GM12878 (cell line): ENCODE measurements at regions of chr3 and their contacts with region 1.

Region 1: GRCh38 chr3:192467230-192468140 is 259.9 kb downstream of the FGF12 start:
- DNase-seq: peak; percentile 8
- ATAC-seq: peak; percentile 92
- H3K4me3 ChIP-seq: no peak overlapping the region
- H3K27ac ChIP-seq: no peak overlapping the region
- H3K4me1 ChIP-seq: no peaks in the 10 kb centered on the region
- H3K27me3 ChIP-seq: no peaks in the 10 kb centered on the region; a peak in 1 of 4 replicates
- CTCF ChIP-seq: peak; percentile 78 to 85 (median 85)
- EP300 ChIP-seq: no peak
- POLR2A ChIP-seq: no peak
- RAD21 ChIP-seq: peak; percentile 88

Region 2: GRCh38 chr3:191783039-191783438 is 684.4 kb before region 1 on chr3:
- CTCF ChIA-PET with region 1: no interaction called
- POLR2A ChIA-PET with region 1: no interaction called
- RAD21 ChIA-PET with region 1: no interaction called
- SMC1A ChIA-PET with region 1: no interaction called
- in situ Hi-C with region 1: no loop called
- intact Hi-C with region 1: no loop called
- DNase-seq: no peak
- ATAC-seq: no peak
- H3K4me3 ChIP-seq: no peak overlapping the region
- H3K27ac ChIP-seq: no peak overlapping the region
- H3K4me1 ChIP-seq: no peaks in the 10 kb centered on the region
- H3K27me3 ChIP-seq: no peaks in the 10 kb centered on the region
- CTCF ChIP-seq: no peak
- EP300 ChIP-seq: no peak
- POLR2A ChIP-seq: no peak
- RAD21 ChIP-seq: no peak

Region 3: DNA sequence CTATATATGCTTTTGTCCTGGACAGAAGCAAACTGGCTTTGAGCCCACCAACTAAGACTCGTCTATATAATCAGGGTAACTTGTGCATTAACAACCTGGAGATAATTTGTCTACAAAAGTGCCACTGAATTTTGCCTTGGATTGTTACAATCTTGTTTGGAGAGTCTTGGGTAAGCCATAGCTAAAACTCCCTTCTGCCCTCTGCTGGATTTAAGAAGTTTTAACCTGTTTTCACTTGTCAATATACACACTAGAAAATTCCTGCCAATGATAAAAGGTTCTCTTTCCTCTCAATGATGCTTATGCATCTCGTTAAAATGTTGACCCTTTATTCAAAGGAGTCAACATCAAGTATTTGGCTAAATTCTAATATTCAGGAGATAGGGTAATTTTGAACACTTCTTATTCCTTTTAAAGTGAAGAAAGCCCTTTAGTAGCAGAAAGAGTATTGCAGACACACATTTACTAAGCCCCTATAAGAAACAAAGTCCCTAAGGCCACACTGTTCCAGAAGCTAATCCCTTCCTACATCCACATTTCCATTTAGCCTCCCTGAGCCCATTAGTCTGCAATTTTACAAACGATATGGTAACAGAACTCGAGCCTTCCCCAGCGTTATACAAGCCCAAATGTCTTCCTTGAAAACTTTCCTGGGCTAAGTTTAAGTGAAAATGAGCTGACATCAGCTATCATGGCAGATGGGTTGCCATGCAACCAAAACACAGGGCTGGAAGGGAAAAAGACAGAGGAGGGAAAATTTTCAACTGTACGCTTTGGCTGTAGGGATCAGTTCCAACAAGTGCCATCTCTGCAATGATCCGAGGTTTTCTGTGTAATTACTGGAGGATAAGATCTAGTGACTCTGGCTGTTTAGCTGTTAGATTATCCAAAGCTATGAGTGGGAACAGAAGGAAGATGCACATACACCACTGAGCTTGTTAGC is 335.7 kb after region 1 on chr3:
- CTCF ChIA-PET with region 1: interaction called, 5 read pairs
- POLR2A ChIA-PET with region 1: no interaction called
- RAD21 ChIA-PET with region 1: no interaction called
- SMC1A ChIA-PET with region 1: no interaction called
- in situ Hi-C with region 1: loop called (anchors 5 kb)
- intact Hi-C with region 1: loop called (anchors 1 kb)
- DNase-seq: no peak
- ATAC-seq: peak; percentile 87
- H3K4me3 ChIP-seq: no peak overlapping the region
- H3K27ac ChIP-seq: no peak overlapping the region
- H3K4me1 ChIP-seq: no peaks in the 10 kb centered on the region
- H3K27me3 ChIP-seq: no peaks in the 10 kb centered on the region
- CTCF ChIP-seq: peak; percentile 47 to 50 (median 47)
- EP300 ChIP-seq: no peak
- POLR2A ChIP-seq: no peak
- RAD21 ChIP-seq: peak; percentile 34; the same call in 1 of the 2 replicates

Region 4: GRCh38 chr3:193030276-193030675 is 562.8 kb after region 1 on chr3:
- CTCF ChIA-PET with region 1: no interaction called
- POLR2A ChIA-PET with region 1: no interaction called
- RAD21 ChIA-PET with region 1: no interaction called
- SMC1A ChIA-PET with region 1: no interaction called
- in situ Hi-C with region 1: no loop called
- intact Hi-C with region 1: loop called (anchors 10 kb)
- DNase-seq: no peak
- ATAC-seq: no peak
- H3K4me3 ChIP-seq: no peak overlapping the region
- H3K27ac ChIP-seq: no peak overlapping the region
- H3K4me1 ChIP-seq: no peaks in the 10 kb centered on the region
- H3K27me3 ChIP-seq: no peaks in the 10 kb centered on the region
- CTCF ChIP-seq: no peak
- EP300 ChIP-seq: no peak
- POLR2A ChIP-seq: no peak
- RAD21 ChIP-seq: no peak